ENCODE measurements at regions of chr7 and their contacts with region 1.

Region 1: GRCh38 chr7:100132697-100133151 is 6.0 kb downstream of the MBLAC1 start:
- DNase-seq: peak; percentile 81
- H3K4me3 ChIP-seq: no peak overlapping the region
- H3K27ac ChIP-seq: no peak overlapping the region
- H3K4me1 ChIP-seq: peaks cover 36% of the 10 kb centered on the region
- CTCF ChIP-seq: peak; percentile 96

Region 2: GRCh38 chr7:99975782-99976521 is 156.8 kb before region 1 on chr7 and contains the start of gene AZGP1:
- CTCF ChIA-PET with region 1: no interaction called
- POLR2A ChIA-PET with region 1: no interaction called
- intact Hi-C with region 1: loop called (anchors 1 kb)
- DNase-seq: peak; percentile 38
- H3K4me3 ChIP-seq: no peak within 1 kb of the TSS
- H3K27ac ChIP-seq: no peak within 1 kb of the TSS
- H3K4me1 ChIP-seq: peaks cover 21% of the 10 kb centered on the region
- CTCF ChIP-seq: no peak
- total RNA-seq, gene AZGP1: 0.60 and 2.1 TPM in 2 replicates

Region 3: DNA sequence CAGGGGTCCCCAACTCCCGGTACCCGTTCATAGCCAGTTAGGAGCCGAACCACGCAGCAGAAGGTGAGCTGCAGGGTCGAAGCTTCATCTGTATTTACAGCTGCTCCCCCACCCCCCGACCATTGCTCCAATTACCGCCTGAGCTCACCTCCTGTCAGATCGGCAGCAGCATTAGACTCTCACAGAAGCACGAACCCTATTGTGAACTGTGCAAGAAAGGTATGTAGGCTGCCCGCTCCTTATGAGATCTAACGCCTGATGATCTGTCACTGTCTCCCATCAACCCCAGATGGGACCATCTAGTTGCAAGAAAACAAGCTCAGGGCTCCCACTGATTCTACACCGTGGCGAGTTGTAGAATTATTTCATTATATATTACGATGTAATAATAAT is 142.3 kb before region 1 on chr7:
- CTCF ChIA-PET with region 1: interaction called, 3 read pairs
- POLR2A ChIA-PET with region 1: no interaction called
- intact Hi-C with region 1: loop called (anchors 5 kb)
- DNase-seq: no peak
- H3K4me3 ChIP-seq: no peak overlapping the region
- H3K27ac ChIP-seq: no peak overlapping the region
- H3K4me1 ChIP-seq: no peaks in the 10 kb centered on the region
- CTCF ChIP-seq: no peak

Region 4: GRCh38 chr7:100221231-100221718 is 88.6 kb after region 1 on chr7:
- CTCF ChIA-PET with region 1: interaction called, 4 read pairs
- POLR2A ChIA-PET with region 1: interaction called, 5 read pairs
- intact Hi-C with region 1: loop called (anchors 1 kb)
- DNase-seq: peak; percentile 98
- H3K4me3 ChIP-seq: peak overlapping the region; percentile 92
- H3K27ac ChIP-seq: peak overlapping the region; percentile 96
- H3K4me1 ChIP-seq: peaks cover 76% of the 10 kb centered on the region
- CTCF ChIP-seq: no peak

Region 5: GRCh38 chr7:100342765-100343164 is 210.0 kb after region 1 on chr7:
- CTCF ChIA-PET with region 1: no interaction called
- POLR2A ChIA-PET with region 1: no interaction called
- intact Hi-C with region 1: loop called (anchors 10 kb)
- DNase-seq: no peak
- H3K4me3 ChIP-seq: no peak overlapping the region
- H3K27ac ChIP-seq: no peak overlapping the region
- H3K4me1 ChIP-seq: peaks cover 49% of the 10 kb centered on the region
- CTCF ChIP-seq: no peak

Region 6: DNA sequence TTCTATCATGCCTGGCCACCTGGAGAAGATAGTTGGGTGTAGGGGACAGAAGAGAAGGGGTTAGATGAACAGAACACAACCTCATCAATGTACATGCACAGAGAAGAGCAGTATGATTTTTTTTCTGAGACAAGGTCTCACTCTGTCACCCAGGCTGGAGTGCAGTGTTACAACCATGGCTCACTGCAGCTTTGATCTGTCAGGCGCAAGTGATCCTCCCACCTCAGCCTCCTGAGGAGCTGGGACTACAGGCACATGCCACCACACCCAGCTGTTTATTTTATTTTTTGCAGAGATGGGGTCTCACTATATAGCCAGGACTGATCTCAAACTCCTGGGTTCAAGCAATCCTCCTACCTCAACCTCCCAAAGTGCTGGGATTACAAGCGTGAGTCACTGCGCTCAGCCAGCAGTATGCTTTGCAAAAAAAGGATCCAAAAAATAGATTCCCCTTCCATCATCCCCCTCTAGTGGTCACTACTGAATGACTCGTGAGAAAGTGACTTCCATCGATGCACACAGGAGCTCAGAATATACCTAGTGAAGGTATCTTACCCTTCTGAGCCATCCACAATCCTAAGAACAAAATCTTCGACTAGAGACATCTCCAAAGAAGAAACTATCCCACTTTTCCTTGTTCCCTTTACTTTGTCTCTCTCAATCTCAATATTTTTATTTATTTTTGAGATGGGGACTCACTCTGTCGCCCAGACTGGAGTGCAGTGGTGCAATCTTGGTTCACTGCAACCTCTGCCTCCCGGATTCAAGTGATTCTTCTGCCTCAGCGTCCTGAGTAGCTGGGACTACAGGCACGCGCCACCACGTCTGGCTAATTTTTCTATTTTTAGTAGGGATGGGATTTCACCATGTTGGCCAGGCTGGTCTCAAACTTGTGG is 274.8 kb after region 1 on chr7:
- CTCF ChIA-PET with region 1: no interaction called
- POLR2A ChIA-PET with region 1: interaction called, 6 read pairs
- intact Hi-C with region 1: loop called (anchors 1 kb)
- DNase-seq: peak; percentile 83
- H3K4me3 ChIP-seq: no peak overlapping the region
- H3K27ac ChIP-seq: no peak overlapping the region
- H3K4me1 ChIP-seq: peaks cover 33% of the 10 kb centered on the region
- CTCF ChIP-seq: peak; percentile 89

Region 7: DNA sequence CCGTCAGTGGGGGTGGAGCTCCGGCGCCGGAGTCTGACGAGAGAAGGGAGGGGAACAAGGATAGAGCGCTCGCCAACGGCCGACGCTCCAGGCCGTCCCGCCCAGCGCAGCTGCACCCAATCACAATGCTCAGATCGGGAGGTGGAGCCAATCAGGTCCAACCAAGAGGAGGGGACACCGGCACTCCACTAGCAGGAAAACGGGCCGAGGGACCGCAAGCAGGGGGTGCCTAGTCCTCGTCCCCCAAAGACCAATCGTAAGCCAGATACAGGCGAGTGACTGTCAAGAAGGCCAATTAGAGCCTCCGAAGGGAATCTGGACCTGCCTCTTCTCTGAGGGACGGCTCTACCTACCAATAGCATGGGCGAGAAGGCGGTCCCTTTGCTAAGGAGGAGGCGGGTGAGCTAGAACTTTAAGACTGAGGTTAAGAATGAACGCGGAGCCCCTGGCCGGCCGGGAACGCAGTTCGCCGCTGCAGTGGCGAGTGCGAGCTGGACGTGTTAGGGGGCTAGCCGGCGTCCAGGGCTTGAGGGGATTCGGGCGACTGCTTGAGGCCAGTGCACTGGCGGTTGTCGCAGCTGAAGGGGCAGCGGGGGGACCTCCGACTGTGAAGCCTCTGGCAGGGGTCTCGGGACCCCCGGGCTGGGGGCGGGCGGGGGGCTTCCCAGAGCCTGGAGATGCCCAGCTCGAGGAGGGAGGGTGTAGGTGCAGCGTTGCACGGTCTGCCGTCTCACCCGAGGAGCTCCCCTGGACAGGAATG is 453.7 kb after region 1 on chr7 and contains the start of gene FBXO24:
- CTCF ChIA-PET with region 1: no interaction called
- POLR2A ChIA-PET with region 1: no interaction called
- intact Hi-C with region 1: no loop called
- DNase-seq: peak; percentile 100
- H3K4me3 ChIP-seq: peak within 1 kb of the TSS; percentile 91
- H3K27ac ChIP-seq: peak within 1 kb of the TSS; percentile 92
- H3K4me1 ChIP-seq: peaks cover 29% of the 10 kb centered on the region
- CTCF ChIP-seq: no peak
- total RNA-seq, gene FBXO24: 0.16 TPM in 1 of 2 replicates, not detected in the other